Lower leg skin (tissue), 4 donors: ENCODE measurements at regions of chr15 and their contacts with region 1.

Region 1: DNA sequence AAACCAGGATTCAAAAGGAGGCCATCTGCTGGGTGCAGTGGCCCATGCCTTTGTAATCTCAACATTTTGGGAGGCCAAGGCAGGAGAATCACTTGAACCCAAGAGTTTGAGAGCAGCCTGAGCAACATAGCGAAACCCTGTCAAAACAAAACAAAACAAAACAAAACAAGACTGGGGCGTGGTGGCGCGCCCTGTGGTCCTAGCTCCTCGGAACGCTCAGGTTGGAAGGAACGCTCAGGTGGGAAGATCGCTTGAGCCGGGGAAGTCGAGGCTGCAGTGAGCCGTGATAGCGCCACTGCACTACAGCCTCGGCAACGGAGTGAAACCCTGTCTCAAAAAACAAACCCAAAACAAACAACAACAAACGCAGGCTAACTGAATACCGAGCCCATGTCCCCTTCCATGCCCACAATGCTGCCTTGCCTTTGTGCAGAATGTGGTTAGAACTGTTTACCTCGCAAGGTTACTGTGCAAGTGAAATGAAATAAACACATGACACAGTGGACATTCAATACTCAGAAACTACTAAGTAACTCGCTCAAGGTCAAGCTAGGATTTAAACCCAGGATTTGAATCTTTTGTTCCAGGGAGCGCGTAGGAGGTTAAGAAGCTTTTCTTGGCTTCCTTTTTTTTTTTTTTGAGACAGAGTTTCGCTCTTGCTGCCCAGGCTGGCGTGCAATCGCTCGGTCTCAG is 766 bp upstream of the EMC4 start:
- DNase-seq: no peak
- H3K4me3 ChIP-seq: peak overlapping the region; percentile 79
- CTCF ChIP-seq: no peak
- POLR2A ChIP-seq: no peak

Region 2: DNA sequence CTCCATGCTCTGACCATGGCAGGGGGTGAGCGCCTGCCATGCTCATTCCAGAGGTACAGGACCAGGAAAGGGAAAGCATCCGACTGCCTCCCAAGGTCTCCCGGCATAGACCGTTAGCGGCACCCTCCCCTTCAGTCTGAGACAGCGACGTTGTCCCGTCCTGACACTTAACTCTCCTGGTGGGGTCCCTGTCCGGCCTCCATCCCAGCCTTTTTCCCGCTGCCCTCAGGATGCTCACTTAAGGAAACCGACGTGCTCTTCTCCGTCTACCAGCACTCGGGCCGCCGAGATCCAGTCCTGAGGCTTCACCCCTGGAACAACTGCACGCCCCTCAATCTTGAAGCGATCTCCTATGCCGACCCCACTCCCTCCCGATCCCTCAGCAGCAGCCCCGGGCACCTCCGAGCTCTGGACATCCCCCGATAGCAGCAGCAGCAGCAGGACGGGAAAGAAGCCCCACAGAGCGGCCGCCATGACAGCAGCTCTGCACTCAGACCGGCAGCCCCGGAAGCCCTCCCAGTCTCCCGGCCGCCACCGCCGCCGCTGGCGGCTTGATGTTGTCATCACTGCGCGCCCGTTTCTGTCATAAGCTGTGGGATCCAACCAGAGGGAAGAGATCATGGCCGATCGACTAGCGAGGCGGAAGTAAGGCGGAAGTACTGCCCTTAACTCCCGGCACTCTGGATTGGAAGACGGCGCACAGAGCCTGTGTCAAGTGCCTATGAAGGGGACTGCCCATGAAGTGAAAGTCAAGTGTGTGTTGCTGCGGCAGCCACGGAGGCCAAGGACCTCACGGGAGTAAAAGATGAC is 122.5 kb before region 1 on chr15 and contains the starts of genes EMC7 and PGBD4:
- intact Hi-C with region 1: loop called (anchors 5 kb)
- DNase-seq: peak; percentile 99 to 100
- H3K4me3 ChIP-seq: peak within 1 kb of the TSS; percentile 92
- CTCF ChIP-seq: no peak
- POLR2A ChIP-seq: no peak
- total RNA-seq, gene EMC7: 28.8 to 51.3 (median 43.1) TPM
- total RNA-seq, gene PGBD4: 1.2 to 1.5 (median 1.4) TPM